ENCODE measurements at regions of chr12 and their contacts with region 1.

Region 1: GRCh38 chr12:2273288-2273687 is 220.5 kb downstream of the CACNA1C start:
- DNase-seq: no peak
- ATAC-seq: no peak
- H3K4me3 ChIP-seq: no peak overlapping the region
- H3K4me1 ChIP-seq: no peaks in the 10 kb centered on the region
- CTCF ChIP-seq: no peak

Region 2: GRCh38 chr12:2064071-2064507 is 209.2 kb before region 1 on chr12:
- intact Hi-C with region 1: loop called in 1 of 2 experiments (anchors 10 kb)
- DNase-seq: no peak
- ATAC-seq: peak; percentile 54
- H3K4me3 ChIP-seq: no peak overlapping the region
- H3K4me1 ChIP-seq: no peaks in the 10 kb centered on the region
- CTCF ChIP-seq: no peak